Activated CD4-positive, alpha-beta T cell treated with anti-CD3 and anti-CD28 coated beads for 36 hours (primary cell): ENCODE measurements at regions of chr10 and their contacts with region 1.

Region 1: DNA sequence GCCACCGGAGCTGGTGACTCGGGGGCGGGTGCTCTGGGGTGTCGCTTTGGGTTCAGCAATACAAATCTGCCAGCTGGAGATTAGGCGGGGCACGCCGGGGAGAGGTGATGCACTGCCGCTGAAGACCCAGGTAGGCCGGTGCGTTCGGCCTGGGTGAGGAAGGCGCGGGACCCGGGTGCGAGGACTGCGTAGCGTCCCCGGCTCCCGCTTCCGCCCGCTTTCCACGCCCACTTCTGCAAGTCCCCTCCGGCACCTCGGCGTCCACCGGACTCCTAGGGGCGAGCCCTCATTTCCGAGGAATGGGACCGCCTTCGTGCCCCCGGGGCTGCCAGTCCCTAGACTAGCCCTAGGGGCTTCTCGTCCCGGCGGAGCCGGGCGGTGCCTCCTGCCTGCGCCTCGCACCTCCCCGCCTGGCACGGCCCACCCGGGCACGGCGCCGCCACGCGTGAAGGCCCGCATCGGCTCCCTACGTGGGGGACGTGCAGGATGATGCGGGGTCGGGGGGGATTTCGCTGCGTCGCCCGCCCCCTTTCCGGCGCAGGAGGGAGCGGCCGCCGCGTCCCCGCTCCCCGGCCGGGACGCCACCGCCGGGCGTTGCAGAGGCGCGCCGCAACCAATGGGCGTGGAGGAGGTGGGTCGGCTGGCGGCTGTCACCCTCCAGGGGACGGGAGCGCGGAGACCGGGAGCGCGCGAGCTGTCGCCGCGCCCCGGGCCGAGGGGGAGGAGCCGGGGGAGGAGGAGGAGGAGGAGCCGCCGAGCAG is 40.0 kb downstream of the HK1 start:
- DNase-seq: peak; percentile 96
- ATAC-seq: peak; percentile 88
- H3K4me3 Mint-ChIP-seq: peak overlapping the region; percentile 86
- H3K27ac Mint-ChIP-seq: peak overlapping the region; percentile 92
- H3K4me1 Mint-ChIP-seq: peaks cover 53% of the 10 kb centered on the region
- H3K27me3 Mint-ChIP-seq: no peaks in the 10 kb centered on the region

Region 2: DNA sequence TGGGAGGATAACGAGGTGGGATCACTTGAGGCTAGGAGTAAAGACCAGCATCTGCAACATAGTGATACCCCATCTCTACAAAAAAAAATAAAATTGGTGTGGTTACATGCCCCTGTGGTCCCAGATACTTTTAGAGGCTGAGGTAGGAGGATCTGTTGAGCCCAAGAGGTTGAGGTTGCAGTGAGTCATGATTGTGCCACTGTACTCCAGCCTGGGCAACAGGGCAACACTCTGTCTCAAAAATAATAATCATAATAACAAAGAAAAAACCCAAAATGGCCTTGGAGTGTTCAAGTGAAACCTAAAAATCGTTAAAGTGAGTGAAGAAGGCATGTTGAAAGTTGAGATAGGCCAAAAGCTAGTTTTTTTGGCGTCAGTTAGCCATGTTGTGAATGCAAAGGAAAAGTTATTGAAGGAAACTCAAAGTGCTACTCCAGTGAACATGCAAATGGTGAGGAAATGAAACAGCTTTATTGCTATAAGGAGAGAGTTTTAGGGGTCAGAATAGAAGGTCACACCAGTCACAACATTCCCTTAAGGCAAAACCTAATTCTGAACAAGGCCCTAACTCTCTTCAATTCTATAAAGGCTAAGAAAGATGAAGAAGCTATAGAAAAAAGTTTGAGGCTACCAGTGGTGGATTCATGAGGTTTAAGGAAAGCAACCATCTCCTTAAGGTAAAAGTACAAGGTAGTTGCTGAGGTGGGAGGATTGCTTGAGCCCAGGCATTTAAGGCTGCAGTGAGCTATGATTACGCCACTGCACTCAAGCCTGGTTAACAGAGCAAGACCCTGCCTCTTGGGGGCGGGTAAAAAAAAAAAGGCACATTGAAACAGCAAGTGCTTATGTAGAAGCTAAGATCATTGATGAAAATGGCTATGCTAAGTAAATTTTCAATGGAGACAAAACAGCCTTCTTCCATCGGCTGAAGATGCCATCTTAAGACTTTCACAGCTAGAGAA is 536.4 kb before region 1 on chr10:
- CTCF ChIA-PET with region 1: no interaction called
- POLR2A ChIA-PET with region 1: no interaction called
- intact Hi-C with region 1: no loop called
- DNase-seq: no peak
- ATAC-seq: no peak
- H3K4me3 Mint-ChIP-seq: no peak overlapping the region
- H3K27ac Mint-ChIP-seq: peak overlapping the region; percentile 58
- H3K4me1 Mint-ChIP-seq: no peaks in the 10 kb centered on the region
- H3K27me3 Mint-ChIP-seq: no peaks in the 10 kb centered on the region

Region 3: DNA sequence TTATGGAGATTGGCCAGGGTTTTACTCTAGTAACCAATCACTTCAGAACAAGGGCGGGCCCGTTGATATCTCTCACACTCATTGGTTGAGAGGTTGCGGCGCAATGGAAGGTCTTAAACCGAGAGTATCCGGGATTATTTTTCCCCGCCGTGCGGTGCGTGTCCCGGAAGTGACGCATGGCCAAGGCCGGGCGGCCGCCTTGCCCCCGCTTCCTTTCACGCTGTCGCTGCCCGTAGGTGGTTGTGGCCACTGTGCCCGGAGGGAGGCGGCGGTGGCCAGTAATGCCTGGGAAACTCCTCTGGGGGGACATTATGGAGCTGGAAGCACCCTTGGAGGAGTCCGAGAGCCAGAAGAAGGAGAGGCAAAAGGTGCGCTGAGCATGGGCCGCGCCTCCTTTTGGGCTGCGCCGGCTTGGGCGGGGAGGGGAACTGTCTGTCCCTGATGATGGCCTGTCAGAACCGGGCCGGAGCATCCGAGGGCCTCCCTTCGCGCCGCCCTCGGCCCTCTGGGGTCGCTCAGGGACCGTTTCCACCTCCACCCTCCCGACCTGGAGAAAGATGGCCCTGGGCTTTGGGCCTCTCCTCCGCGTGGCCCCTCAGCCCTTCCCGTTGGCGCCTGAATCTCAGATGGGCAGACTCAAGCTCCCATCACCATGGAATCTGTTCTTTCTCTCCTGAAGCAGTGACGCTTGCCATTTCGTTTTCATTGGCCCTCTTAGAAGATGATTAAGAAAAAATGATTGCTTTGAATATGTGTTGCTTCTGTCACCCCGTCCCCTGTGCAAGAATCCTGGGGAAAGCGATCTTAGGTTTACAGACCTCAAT is 417.0 kb before region 1 on chr10 and contains the start of gene DDX50:
- CTCF ChIA-PET with region 1: no interaction called
- POLR2A ChIA-PET with region 1: no interaction called
- intact Hi-C with region 1: loop called in 1 of 2 experiments (anchors 1 kb)
- DNase-seq: peak; percentile 98
- ATAC-seq: peak; percentile 97
- H3K4me3 Mint-ChIP-seq: peak within 1 kb of the TSS; percentile 98
- H3K27ac Mint-ChIP-seq: peak within 1 kb of the TSS; percentile 99
- H3K4me1 Mint-ChIP-seq: peaks cover 48% of the 10 kb centered on the region
- H3K27me3 Mint-ChIP-seq: peaks cover 4% of the 10 kb centered on the region
- total RNA-seq, gene DDX50: 61.6 to 81.6 TPM

Region 4: GRCh38 chr10:68963151-68963550 is 355.1 kb before region 1 on chr10:
- CTCF ChIA-PET with region 1: no interaction called
- POLR2A ChIA-PET with region 1: no interaction called
- intact Hi-C with region 1: no loop called
- DNase-seq: no peak
- ATAC-seq: no peak
- H3K4me3 Mint-ChIP-seq: no peak overlapping the region
- H3K27ac Mint-ChIP-seq: no peak overlapping the region
- H3K4me1 Mint-ChIP-seq: peaks cover 39% of the 10 kb centered on the region
- H3K27me3 Mint-ChIP-seq: no peaks in the 10 kb centered on the region

Region 5: DNA sequence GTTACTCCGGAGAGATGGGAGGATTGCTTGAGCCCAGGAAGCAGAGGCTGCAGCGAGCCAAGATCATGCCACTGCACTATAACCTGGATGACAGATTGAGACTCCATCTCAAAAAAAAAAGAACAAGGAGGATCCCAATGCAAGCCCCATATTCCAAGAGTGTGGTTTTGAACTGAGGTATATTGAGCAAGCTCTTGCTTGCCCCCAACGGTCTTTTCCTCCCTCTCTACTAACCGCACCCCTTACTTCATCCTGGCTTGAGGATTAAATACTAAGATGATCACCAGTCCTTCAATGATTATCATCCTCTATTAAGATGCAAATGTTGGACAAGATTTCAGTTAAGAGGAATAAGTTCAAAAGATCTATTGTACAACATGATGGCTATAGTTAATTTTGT is 242.9 kb before region 1 on chr10:
- CTCF ChIA-PET with region 1: no interaction called
- POLR2A ChIA-PET with region 1: no interaction called
- intact Hi-C with region 1: no loop called
- DNase-seq: no peak
- ATAC-seq: no peak
- H3K4me3 Mint-ChIP-seq: no peak overlapping the region
- H3K27ac Mint-ChIP-seq: no peak overlapping the region
- H3K4me1 Mint-ChIP-seq: peaks cover 7% of the 10 kb centered on the region
- H3K27me3 Mint-ChIP-seq: no peaks in the 10 kb centered on the region

Region 6: DNA sequence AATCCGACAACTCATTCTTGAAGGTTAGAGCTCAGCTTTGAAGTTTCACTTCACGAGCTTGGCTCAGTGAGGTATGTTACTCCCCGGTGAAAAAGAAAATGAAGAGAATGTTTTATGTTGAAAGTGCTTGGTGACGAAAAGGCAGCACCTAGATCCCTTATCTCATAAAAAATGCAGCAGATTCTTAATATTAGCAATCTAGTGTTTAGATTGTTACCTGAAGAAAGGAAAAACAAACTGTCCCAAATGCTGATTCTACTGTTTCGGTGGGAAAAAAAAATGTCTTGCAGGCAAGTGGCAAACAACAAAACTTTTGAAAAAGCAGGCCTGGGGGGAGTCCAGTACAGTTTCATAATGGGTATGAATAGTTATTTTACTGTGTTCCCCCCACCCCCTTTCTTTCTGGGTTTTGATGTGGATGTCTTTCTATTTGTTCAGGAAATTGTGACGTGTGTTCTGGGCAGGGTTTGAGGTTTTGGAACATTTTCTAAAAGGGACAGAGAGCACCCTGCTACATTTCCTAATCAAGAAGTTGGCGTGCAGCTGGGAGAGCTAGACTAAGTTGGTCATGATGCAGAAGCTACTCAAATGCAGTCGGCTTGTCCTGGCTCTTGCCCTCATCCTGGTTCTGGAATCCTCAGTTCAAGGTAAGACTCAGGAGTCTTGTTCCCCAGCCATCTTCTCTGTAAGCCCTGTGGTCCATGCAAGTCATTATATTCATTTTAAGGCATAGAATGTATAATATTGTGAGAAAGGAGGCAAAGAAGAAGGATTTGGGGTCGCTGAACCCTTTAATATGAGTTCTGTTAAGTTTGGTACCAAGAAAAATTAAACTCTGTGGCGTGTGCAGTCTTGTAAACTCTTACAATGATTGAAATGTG is 230.5 kb before region 1 on chr10 and contains the start of gene SRGN:
- CTCF ChIA-PET with region 1: no interaction called
- POLR2A ChIA-PET with region 1: no interaction called
- intact Hi-C with region 1: loop called in 1 of 2 experiments (anchors 2 kb)
- DNase-seq: peak; percentile 87
- ATAC-seq: peak; percentile 57
- H3K4me3 Mint-ChIP-seq: peak within 1 kb of the TSS; percentile 86
- H3K27ac Mint-ChIP-seq: peak within 1 kb of the TSS; percentile 99
- H3K4me1 Mint-ChIP-seq: peaks cover 55% of the 10 kb centered on the region
- H3K27me3 Mint-ChIP-seq: no peaks in the 10 kb centered on the region
- total RNA-seq, gene SRGN: 375 to 400 TPM

Region 7: DNA sequence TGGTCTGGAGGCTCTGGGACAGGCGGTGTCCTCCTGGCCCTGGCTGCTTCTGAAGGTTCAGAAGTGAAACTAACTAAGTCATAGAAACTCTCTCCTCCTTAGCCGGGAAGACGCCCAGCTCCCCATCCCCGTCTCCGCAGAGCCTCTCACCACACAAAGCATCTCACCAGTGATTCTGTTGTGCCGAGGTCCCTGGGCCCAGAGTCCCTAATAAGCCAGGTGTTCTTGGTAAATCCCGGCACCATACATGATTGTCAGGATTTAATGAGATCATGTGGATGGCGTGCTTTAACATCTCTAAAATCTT is 88.7 kb before region 1 on chr10:
- CTCF ChIA-PET with region 1: interaction called, 4 read pairs
- POLR2A ChIA-PET with region 1: no interaction called
- intact Hi-C with region 1: loop called in 1 of 2 experiments (anchors 2 kb)
- DNase-seq: no peak
- ATAC-seq: no peak
- H3K4me3 Mint-ChIP-seq: peak overlapping the region; percentile 55
- H3K27ac Mint-ChIP-seq: peak overlapping the region; percentile 88
- H3K4me1 Mint-ChIP-seq: peaks cover 58% of the 10 kb centered on the region
- H3K27me3 Mint-ChIP-seq: no peaks in the 10 kb centered on the region

Region 8: DNA sequence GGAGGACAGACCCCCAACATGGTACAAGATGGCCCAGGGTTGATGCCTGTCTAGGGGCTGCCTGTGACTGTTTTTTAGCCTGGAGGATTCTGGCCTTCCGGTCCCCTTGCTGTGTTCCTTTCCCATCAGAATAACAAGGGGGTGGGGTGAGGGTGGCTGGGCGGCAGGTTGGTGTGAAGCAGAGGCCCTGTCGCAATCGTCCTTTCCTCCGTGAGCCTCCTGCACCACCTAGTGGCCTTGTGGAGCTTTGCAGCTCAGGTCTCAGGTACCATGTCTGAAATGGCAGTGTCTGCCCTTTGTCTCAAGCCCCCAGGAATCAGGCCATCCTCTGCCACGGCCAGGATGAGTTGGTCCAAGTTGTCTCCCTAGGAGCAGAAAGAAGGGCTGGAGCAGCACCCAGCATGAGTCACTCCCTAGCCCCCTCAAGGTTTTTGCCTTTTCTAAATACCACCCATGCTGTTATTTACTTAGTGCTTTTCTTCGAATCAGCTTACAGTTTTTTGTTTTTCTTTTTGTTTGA is 74.3 kb after region 1 on chr10:
- CTCF ChIA-PET with region 1: interaction called, 4 read pairs
- POLR2A ChIA-PET with region 1: no interaction called
- intact Hi-C with region 1: loop called (anchors 1 to 2 kb)
- DNase-seq: peak; percentile 89
- ATAC-seq: peak; percentile 95
- H3K4me3 Mint-ChIP-seq: no peak overlapping the region
- H3K27ac Mint-ChIP-seq: peak overlapping the region; percentile 67
- H3K4me1 Mint-ChIP-seq: peaks cover 19% of the 10 kb centered on the region
- H3K27me3 Mint-ChIP-seq: no peaks in the 10 kb centered on the region

Region 9: DNA sequence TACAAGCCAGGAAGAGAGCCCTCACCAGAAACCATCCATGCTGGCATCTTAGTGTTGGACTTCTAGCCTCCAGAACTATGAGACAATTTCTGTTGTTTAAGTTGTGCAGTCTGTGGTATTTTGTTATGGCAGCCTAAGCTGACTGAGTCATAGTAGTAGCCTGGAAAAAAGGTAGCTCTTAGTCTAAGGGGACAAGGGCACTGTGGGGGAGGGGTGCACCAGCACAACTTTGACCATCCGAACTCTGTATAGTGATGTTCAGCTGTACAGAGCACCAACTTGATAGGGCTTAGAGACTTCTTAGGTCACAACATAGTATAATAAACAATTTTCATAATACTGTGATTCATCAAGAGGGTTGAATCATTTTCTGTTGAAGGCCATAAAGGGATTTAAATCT is 1099.9 kb after region 1 on chr10:
- CTCF ChIA-PET with region 1: no interaction called
- POLR2A ChIA-PET with region 1: no interaction called
- intact Hi-C with region 1: loop called in 1 of 2 experiments (anchors 10 kb)
- DNase-seq: peak; percentile 32
- ATAC-seq: peak; percentile 60
- H3K4me3 Mint-ChIP-seq: no peak overlapping the region
- H3K27ac Mint-ChIP-seq: peak overlapping the region; percentile 40
- H3K4me1 Mint-ChIP-seq: peaks cover 30% of the 10 kb centered on the region
- H3K27me3 Mint-ChIP-seq: no peaks in the 10 kb centered on the region